ENCODE measurements at regions of chr7 and their contacts with region 1.

Region 1: GRCh38 chr7:12490117-12490688 is 80.3 kb upstream of the SCIN start:
- DNase-seq: peak in 1 of 35 experiments; percentile 34
- ATAC-seq: no peak
- H3K4me3 ChIP-seq: no peak overlapping the region
- H3K4me3 Mint-ChIP-seq: no peak overlapping the region
- H3K27ac ChIP-seq: no peak overlapping the region
- H3K27ac Mint-ChIP-seq: no peak overlapping the region
- H3K4me1 ChIP-seq: no peaks in the 10 kb centered on the region
- H3K4me1 Mint-ChIP-seq: no peaks in the 10 kb centered on the region
- H3K27me3 ChIP-seq: no peaks in the 10 kb centered on the region
- H3K27me3 Mint-ChIP-seq: peaks cover 2 to 8% of the 10 kb centered on the region in 2 donors

Region 2: DNA sequence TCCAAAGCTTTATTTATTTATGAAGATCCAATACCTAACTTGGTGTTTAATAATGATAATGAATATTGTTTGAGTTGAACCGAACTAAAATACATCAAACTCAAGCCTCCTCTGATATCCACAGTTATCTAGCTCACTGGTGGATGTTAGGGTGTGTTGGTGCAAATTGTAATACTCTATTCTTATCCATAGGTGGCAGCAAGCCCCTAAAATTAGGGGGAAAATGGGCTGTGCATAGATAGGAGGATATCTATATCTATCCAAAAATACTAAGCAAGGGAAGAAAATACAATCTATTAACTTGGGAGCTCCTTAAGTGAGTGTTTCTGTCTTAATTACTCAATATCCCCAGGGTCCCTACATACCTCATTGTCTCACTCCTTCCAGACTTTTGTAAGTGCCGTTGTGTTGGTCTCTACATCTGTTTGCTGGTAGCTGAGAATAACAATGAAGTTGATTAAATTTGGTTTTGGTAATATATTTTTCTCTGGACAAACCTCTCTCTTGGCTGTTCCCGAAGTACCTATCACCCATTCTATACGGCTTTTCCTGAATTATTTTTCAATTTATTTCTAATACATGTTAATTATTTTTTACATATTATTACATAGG is 31.6 kb before region 1 on chr7:
- CTCF ChIA-PET with region 1: interaction called, 18 to 41 read pairs
- POLR2A ChIA-PET with region 1: no interaction called
- DNase-seq: peak in 2 of 35 experiments; percentile 9 to 42
- ATAC-seq: no peak
- H3K4me3 ChIP-seq: no peak overlapping the region
- H3K4me3 Mint-ChIP-seq: no peak overlapping the region
- H3K27ac ChIP-seq: no peak overlapping the region
- H3K27ac Mint-ChIP-seq: no peak overlapping the region
- H3K4me1 ChIP-seq: no peaks in the 10 kb centered on the region
- H3K4me1 Mint-ChIP-seq: no peaks in the 10 kb centered on the region
- H3K27me3 ChIP-seq: no peaks in the 10 kb centered on the region
- H3K27me3 Mint-ChIP-seq: peaks cover 10 to 15% of the 10 kb centered on the region in 2 donors

Measured in T-cell (primary cell).